PC-9 (cell line): ENCODE measurements at regions of chr12 and their contacts with region 1.

Region 1: DNA sequence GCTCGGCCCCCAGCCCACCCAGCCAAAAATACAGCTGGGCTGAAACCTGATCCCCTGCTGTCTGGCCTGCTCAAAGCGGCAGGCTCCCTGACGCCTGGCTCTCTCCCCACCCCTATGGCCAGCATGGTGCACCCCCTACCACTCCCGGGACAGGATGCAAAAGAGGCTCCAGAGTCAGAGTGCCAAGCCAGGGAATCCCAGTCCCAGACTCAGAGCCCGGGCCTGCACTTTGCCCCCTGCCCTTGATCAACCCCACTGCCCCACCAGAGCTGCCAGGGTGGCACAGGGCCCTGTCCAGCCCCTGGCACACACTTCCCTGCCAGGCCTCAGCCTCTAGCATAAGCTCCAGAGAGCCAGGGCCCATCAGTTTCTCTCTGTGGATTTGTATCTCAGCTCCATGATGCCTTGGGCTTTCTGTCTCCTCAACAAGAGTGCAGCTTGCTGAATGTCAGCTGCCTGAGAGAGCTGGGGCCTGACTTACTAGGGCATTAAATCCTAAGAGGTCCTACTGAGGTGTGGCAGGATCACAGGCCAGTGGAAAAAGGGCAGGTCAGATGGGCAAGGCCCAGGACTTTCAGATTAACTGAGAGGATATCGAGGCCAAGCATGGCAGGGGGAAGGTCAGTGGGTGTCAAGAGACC is 13.8 kb downstream of the ACVRL1 start:
- DNase-seq: no peak
- H3K4me3 ChIP-seq: no peak overlapping the region
- H3K27ac ChIP-seq: no peak overlapping the region
- H3K4me1 ChIP-seq: no peaks in the 10 kb centered on the region
- H3K27me3 ChIP-seq: no peaks in the 10 kb centered on the region
- CTCF ChIP-seq: no peak

Region 2: GRCh38 chr12:52486166-52487105 is 565.3 kb after region 1 on chr12:
- CTCF ChIA-PET with region 1: no interaction called
- POLR2A ChIA-PET with region 1: no interaction called
- intact Hi-C with region 1: no loop called
- DNase-seq: no peak
- H3K4me3 ChIP-seq: no peak overlapping the region
- H3K27ac ChIP-seq: no peak overlapping the region
- H3K4me1 ChIP-seq: no peaks in the 10 kb centered on the region
- H3K27me3 ChIP-seq: no peaks in the 10 kb centered on the region
- CTCF ChIP-seq: no peak

Region 3: DNA sequence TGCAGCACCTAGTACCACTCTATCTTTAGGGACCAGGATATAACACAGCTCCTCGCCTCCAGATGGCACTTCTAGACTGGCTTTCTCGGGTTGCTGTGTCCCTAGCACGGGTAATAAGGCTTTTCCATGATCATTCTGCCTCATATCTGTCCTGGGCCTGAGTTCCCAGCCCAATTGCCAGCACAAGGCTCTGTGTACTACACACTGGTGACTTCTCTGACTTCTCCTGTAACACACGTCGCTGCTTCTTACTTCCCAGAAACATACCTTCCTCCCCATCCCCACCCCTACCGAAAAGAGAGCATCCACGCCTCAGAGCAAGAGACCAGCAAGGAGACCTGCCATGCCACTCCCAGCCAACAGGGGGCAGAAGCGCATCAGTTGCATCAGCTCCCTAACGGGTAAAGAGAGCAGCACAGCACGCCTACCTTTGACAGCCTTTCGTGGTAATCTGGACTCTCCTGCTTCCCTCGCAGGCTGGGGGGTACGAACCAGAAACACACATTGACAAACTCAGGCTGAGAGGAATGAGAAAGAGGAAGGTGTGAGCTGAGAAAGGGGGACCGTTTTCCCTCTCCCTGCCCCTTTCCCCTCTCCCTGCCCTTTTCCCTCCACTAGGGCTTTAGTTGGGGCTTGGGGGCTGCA is 1238.2 kb after region 1 on chr12:
- CTCF ChIA-PET with region 1: no interaction called
- POLR2A ChIA-PET with region 1: interaction called, 12 read pairs
- intact Hi-C with region 1: no loop called
- DNase-seq: peak in 1 of 2 experiments; percentile 77
- H3K4me3 ChIP-seq: no peak overlapping the region
- H3K27ac ChIP-seq: no peak overlapping the region
- H3K4me1 ChIP-seq: no peaks in the 10 kb centered on the region; the same call in 1 of the 2 replicates
- H3K27me3 ChIP-seq: no peaks in the 10 kb centered on the region
- CTCF ChIP-seq: peak; percentile 97